ENCODE measurements at regions of chr3 and their contacts with region 1.

Region 1: GRCh38 chr3:25856902-25857518 is 67.1 kb downstream of the OXSM start:
- DNase-seq: no peak
- ATAC-seq: peak; percentile 95
- H3K4me3 ChIP-seq: no peak overlapping the region
- H3K27ac ChIP-seq: no peak overlapping the region
- H3K4me1 ChIP-seq: no peaks in the 10 kb centered on the region
- H3K27me3 ChIP-seq: peaks cover 0 to 2% of the 10 kb centered on the region in 2 experiments; a peak in 1 of 4 replicates
- CTCF ChIP-seq: peak; percentile 60 to 74 (median 66)
- EP300 ChIP-seq: no peak
- POLR2A ChIP-seq: no peak
- RAD21 ChIP-seq: peak; percentile 74

Region 2: DNA sequence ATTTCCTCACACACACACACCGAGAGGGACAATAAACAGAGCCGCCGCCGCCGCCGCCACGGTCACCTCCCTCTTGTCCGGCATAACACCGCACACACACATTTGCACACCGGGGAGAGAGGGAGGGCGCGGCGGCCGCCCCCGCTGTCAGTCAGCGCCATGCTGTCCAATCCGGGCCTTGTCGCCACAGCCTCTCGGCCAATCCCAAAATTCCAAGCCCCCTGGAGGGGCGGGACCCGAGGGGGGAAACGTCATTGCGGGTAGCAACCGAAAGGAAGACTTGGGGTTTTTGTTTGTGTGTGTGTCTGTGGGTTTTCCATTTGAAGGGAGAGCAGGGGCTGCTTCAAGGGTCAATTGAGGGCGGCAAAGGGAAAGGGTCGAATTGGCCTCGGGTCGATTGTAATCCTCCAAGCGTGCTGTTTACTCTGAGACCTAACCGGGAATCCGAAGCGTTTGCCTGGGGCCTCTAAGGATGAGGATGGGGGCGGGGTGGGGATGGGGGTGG is 192.1 kb before region 1 on chr3 and contains the start of gene TOP2B:
- CTCF ChIA-PET with region 1: interaction called, 63 read pairs
- POLR2A ChIA-PET with region 1: interaction called, 3 read pairs
- RAD21 ChIA-PET with region 1: interaction called, 22 read pairs
- SMC1A ChIA-PET with region 1: interaction called, 49 read pairs
- in situ Hi-C with region 1: no loop called
- intact Hi-C with region 1: no loop called
- DNase-seq: peak; percentile 81
- ATAC-seq: peak; percentile 90
- H3K4me3 ChIP-seq: peak within 1 kb of the TSS; percentile 72
- H3K27ac ChIP-seq: peak within 1 kb of the TSS; percentile 92
- H3K4me1 ChIP-seq: peaks cover 11% of the 10 kb centered on the region
- H3K27me3 ChIP-seq: no peaks in the 10 kb centered on the region
- CTCF ChIP-seq: no peak
- EP300 ChIP-seq: no peak; a peak in 3 of 4 replicates
- POLR2A ChIP-seq: peak; percentile 85
- RAD21 ChIP-seq: no peak
- polyA plus RNA-seq, gene TOP2B: 34.2 to 57.5 TPM

Region 3: GRCh38 chr3:25789596-25790556 is 67.1 kb before region 1 on chr3 and contains the start of gene OXSM:
- CTCF ChIA-PET with region 1: interaction called, 3 read pairs
- POLR2A ChIA-PET with region 1: no interaction called
- RAD21 ChIA-PET with region 1: no interaction called
- SMC1A ChIA-PET with region 1: interaction called, 23 read pairs
- in situ Hi-C with region 1: no loop called
- intact Hi-C with region 1: no loop called
- DNase-seq: peak; percentile 93
- ATAC-seq: peak; percentile 94
- H3K4me3 ChIP-seq: peak within 1 kb of the TSS; percentile 78
- H3K27ac ChIP-seq: peak within 1 kb of the TSS; percentile 84
- H3K4me1 ChIP-seq: peaks cover 4% of the 10 kb centered on the region; the same call in 1 of the 2 replicates
- H3K27me3 ChIP-seq: no peaks in the 10 kb centered on the region
- CTCF ChIP-seq: no peak
- EP300 ChIP-seq: peak; percentile 43 to 61; a peak in 3 of 4 replicates
- POLR2A ChIP-seq: peak; percentile 91
- RAD21 ChIP-seq: 0 out of 2 replicates have a peak, but pooled peaks have one; percentile 6
- polyA plus RNA-seq, gene OXSM: 28.6 to 32.5 TPM

Region 4: GRCh38 chr3:25831578-25831977 is 25.4 kb before region 1 on chr3:
- CTCF ChIA-PET with region 1: interaction called, 7 read pairs
- POLR2A ChIA-PET with region 1: no interaction called
- RAD21 ChIA-PET with region 1: interaction called, 3 read pairs
- SMC1A ChIA-PET with region 1: interaction called, 10 read pairs
- in situ Hi-C with region 1: no loop called
- intact Hi-C with region 1: no loop called
- DNase-seq: no peak
- ATAC-seq: peak; percentile 66
- H3K4me3 ChIP-seq: no peak overlapping the region
- H3K27ac ChIP-seq: no peak overlapping the region
- H3K4me1 ChIP-seq: peaks cover 5% of the 10 kb centered on the region; the same call in 1 of the 2 replicates
- H3K27me3 ChIP-seq: no peaks in the 10 kb centered on the region
- CTCF ChIP-seq: peak; percentile 25 to 37 (median 30); a peak in 4 of 6 replicates
- EP300 ChIP-seq: no peak
- POLR2A ChIP-seq: no peak
- RAD21 ChIP-seq: peak; percentile 40; the same call in 1 of the 2 replicates

Region 5: DNA sequence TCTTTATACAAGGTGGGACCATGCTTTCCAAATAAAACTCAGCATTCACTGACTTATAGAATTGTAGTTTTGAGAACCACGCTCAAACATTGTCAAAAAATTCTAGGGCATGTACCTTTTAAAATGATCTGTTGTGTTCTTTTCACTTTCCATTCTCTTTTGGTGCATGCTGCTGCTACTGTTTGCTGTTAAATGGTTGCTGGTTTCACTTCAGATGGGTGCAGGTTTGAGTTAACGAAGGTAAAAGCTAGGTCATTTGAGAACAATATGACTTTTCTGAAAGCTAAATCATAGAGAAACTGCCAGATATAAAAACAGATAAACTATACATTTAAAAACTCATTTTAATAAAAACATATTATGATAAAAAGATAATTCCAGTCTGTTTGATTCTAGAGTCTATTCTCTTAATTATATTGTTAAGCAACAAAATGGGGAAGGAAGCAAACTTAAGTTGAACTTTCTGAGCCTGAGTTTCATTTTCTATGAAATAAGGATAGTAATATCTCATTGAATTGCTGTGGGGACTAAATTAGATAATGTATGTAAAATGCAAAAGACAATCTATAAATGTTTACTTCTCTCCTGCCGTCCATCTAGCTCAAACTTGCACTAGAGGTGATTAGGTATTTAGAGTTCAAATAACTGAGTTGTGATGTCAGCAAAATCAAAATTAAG is 15.3 kb after region 1 on chr3:
- CTCF ChIA-PET with region 1: interaction called, 15 read pairs
- POLR2A ChIA-PET with region 1: no interaction called
- RAD21 ChIA-PET with region 1: interaction called, 3 read pairs
- SMC1A ChIA-PET with region 1: interaction called, 12 read pairs
- in situ Hi-C with region 1: no loop called
- intact Hi-C with region 1: no loop called
- DNase-seq: no peak
- ATAC-seq: peak; percentile 93
- H3K4me3 ChIP-seq: no peak overlapping the region; the same call in 1 of the 2 replicates
- H3K27ac ChIP-seq: peak overlapping the region; percentile 22; the same call in 1 of the 2 replicates
- H3K4me1 ChIP-seq: peaks cover 12% of the 10 kb centered on the region
- H3K27me3 ChIP-seq: no peaks in the 10 kb centered on the region
- CTCF ChIP-seq: no peak
- EP300 ChIP-seq: no peak
- POLR2A ChIP-seq: no peak
- RAD21 ChIP-seq: no peak

Region 6: DNA sequence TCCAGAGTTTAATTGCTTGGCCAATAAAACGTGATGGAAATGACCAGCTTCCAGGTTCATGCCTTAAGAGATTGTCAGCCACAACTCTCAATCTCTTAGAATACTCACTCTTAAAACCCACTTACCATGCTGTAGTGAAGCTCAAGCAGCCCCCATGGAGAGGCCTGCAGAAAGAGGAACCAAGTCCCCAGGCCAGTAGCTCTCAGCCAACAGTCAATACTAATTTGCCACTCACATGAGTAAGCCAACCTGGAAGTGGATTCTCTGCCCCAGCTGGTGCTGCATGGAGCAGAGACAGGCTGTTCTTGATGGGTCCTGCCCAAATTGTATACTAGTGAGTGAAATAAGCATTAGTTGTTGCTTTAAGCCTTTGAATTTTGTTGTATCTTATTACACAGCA is 88.8 kb after region 1 on chr3:
- CTCF ChIA-PET with region 1: no interaction called
- POLR2A ChIA-PET with region 1: no interaction called
- RAD21 ChIA-PET with region 1: no interaction called
- SMC1A ChIA-PET with region 1: no interaction called
- in situ Hi-C with region 1: no loop called
- intact Hi-C with region 1: no loop called
- DNase-seq: no peak
- ATAC-seq: peak; percentile 53
- H3K4me3 ChIP-seq: no peak overlapping the region
- H3K27ac ChIP-seq: no peak overlapping the region
- H3K4me1 ChIP-seq: no peaks in the 10 kb centered on the region
- H3K27me3 ChIP-seq: no peaks in the 10 kb centered on the region
- CTCF ChIP-seq: no peak
- EP300 ChIP-seq: no peak
- POLR2A ChIP-seq: no peak
- RAD21 ChIP-seq: no peak

Measured in GM12878 (cell line).